A549 (cell line): ENCODE measurements at regions of chr14 and their contacts with region 1.

Region 1: DNA sequence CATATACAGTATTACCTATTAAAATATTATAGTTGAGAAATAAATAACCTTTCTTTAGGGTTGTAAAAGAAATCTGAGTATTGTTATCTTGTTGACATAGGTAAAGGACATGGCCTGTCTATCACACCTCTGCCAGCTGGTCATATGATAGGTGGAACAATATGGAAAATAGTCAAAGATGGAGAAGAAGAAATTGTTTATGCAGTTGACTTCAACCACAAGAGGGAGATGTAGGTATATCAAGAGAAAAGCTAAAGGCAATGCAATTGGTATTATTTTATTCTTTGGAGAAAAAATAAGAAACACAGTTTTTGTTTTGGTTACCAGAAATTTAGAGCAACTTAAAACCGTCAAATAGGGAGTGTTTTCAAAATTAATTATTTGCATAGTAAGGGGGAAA is 13.5 kb downstream of the CPSF2 start:
- DNase-seq: peak; percentile 11 to 59
- ATAC-seq: peak; percentile 56 to 66; a peak in 4 of 6 replicates
- H3K4me3 ChIP-seq: no peak overlapping the region
- H3K27ac ChIP-seq: no peak overlapping the region
- H3K4me1 ChIP-seq: no peaks in the 10 kb centered on the region
- CTCF ChIP-seq: peak; percentile 75
- EP300 ChIP-seq: no peak
- POLR2A ChIP-seq: no peak
- RAD21 ChIP-seq: peak; percentile 70

Region 2: DNA sequence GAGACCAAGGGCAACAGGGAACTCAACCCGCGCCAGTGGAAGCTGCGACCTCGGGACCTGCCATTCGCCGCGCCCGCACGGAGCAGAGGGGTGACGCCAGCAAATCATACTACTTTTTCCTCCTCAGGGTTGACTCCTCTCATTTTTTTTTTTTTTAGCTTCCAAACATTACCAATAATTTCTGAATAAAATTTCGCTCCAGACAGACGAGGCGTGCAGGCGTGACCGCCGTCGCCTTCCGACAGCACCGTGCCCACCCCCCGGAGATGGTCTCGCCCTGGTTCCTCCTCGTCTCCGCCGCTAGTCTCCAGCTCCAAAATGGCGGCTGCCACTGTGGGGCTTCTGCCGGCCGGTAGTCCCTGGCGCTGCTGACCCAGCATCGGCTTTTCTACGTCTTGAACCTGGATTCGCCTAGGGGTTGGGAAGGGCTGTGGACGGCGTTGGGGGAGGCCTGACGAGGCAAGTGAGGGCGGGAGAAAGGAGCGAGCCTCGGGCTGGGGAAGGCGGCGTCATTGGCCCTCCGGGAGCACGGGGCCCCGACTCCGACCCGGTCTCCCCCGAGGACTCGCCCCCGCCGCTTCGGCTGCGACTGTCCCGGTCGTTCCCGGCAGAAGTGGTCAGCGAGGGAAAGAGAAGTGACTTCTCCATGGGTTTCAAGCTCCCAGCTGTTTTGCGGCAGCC is 13.5 kb before region 1 on chr14 and contains the starts of genes CPSF2 and NDUFB1:
- CTCF ChIA-PET with region 1: interaction called, 32 read pairs
- POLR2A ChIA-PET with region 1: interaction called, 3 read pairs
- DNase-seq: peak; percentile 79 to 96
- ATAC-seq: peak; percentile 94 to 96
- H3K4me3 ChIP-seq: peak within 1 kb of the TSS; percentile 94
- H3K27ac ChIP-seq: peak within 1 kb of the TSS; percentile 97 to 98
- H3K4me1 ChIP-seq: peaks cover 14% of the 10 kb centered on the region; the same call in 2 of the 3 replicates
- CTCF ChIP-seq: no peak
- EP300 ChIP-seq: no peak
- POLR2A ChIP-seq: peak; percentile 94
- RAD21 ChIP-seq: no peak
- polyA plus RNA-seq, gene CPSF2: 60.0 and 75.3 TPM in 2 replicates
- polyA plus RNA-seq, gene NDUFB1: 397 and 704 TPM in 2 replicates

Region 3: GRCh38 chr14:92456215-92457015 is 321.1 kb after region 1 on chr14:
- CTCF ChIA-PET with region 1: interaction called, 15 read pairs
- POLR2A ChIA-PET with region 1: no interaction called
- DNase-seq: peak; percentile 53 to 79
- ATAC-seq: peak; percentile 89 to 93
- H3K4me3 ChIP-seq: no peak overlapping the region
- H3K27ac ChIP-seq: 0 out of 6 replicates have a peak overlapping the region, but pooled peaks of 1 of the 2 experiments have one; percentile 29
- H3K4me1 ChIP-seq: no peaks in the 10 kb centered on the region
- CTCF ChIP-seq: peak; percentile 80
- EP300 ChIP-seq: no peak
- POLR2A ChIP-seq: no peak
- RAD21 ChIP-seq: peak; percentile 91 to 92